Endothelial cell of umbilical vein (primary cell): ENCODE measurements at regions of chr12 and their contacts with region 1.

Region 1: DNA sequence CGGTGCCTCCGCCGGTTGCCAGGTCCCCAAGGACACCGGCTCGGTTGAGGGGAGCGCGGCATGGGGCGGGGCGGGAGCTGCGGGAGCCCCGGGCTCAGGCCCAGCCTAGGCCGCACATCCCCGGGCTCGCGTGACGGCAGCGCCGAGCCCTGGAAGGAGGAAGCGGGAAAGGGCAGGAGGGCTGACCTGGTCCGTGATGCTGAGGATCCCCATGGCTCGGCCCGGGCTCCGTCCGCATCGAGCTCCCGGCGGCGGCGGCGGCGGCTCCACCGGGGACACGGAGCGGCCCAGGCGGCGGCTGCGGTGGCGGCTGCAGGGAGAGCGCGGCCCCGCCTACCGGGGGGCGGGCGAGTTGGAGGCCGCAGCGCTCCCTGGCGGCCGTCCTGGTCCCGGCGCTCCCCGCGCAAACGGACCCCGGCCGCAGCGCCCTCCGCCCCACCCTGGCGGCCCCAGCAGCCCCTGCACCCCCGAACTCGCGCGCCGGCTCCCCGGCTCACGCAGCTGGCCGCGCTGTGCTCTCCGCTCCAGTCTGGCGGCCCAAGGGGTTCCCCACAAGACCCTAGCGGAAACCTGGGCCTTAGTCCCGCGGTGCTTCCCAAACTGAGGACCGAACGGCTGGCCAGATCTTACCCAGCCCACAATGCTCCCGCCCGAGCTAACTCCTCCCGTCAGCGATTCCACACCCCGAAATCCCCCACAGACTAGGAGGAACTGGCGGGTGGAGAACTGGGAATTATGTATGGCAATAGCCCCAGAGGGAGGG is at the start of gene ANKRD52:
- DNase-seq: peak; percentile 76
- H3K4me3 ChIP-seq: peak within 1 kb of the TSS; percentile 84 to 96 (median 91)
- H3K27ac ChIP-seq: peak within 1 kb of the TSS; percentile 22
- H3K4me1 ChIP-seq: peaks cover 18% of the 10 kb centered on the region
- H3K27me3 ChIP-seq: no peaks in the 10 kb centered on the region
- CTCF ChIP-seq: peak; percentile 67 to 74
- POLR2A ChIP-seq: peak; percentile 57
- total RNA-seq, gene ANKRD52: 62.0 and 66.3 TPM in 2 replicates

Region 2: DNA sequence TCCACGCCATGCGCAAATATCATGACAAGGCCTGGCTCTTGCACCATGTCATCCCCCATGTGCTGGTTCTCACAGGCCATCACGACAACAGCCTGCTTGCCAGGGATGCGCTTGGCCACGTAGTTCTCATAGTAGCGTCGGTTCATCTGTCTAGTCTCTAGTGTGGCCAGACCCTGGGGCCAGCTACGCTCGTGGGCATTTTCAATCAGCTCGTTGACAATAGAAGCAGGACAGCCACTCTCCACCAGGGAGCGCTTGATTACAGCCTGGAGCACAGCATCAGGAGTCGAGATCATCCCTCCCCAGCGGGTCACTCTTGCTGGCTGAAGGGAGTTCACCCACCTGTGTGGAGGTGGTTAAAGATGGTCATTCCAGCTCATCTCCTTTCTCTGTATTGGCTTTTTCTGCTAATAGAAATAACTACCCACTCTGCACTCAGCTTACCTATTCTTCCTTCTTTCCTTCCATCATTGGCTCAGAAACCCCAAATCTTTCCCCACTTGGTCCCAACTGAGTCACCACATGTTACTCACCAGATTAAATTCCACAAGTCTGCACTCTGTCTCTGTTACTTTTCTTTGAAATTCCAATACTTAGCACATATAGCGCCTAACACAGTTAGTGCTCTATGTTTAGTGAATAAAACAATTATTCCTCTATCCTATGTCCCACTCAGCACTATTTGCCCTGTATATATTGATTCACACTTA is 51.6 kb before region 1 on chr12:
- CTCF ChIA-PET with region 1: interaction called, 13 read pairs
- POLR2A ChIA-PET with region 1: no interaction called
- dilution Hi-C with region 1: no loop called
- intact Hi-C with region 1: no loop called
- DNase-seq: peak; percentile 52
- H3K4me3 ChIP-seq: no peak overlapping the region
- H3K27ac ChIP-seq: no peak overlapping the region
- H3K4me1 ChIP-seq: peaks cover 17% of the 10 kb centered on the region
- H3K27me3 ChIP-seq: no peaks in the 10 kb centered on the region
- CTCF ChIP-seq: peak; percentile 63 to 73
- POLR2A ChIP-seq: peak; percentile 30